Activated T-helper 2 cell treated with anti-CD3 and anti-CD28 coated beads, Interferon-gamma antibody, Interleukin-2, Interleukin-4, amounts not matched to agents 10 μg/mL and 5 μg/mL and 100 μg/mL, durations not matched to agents 14 hours and 24 hours and 36 hours (primary cell): ENCODE measurements at regions of chr1 and their contacts with region 1.

Region 1: DNA sequence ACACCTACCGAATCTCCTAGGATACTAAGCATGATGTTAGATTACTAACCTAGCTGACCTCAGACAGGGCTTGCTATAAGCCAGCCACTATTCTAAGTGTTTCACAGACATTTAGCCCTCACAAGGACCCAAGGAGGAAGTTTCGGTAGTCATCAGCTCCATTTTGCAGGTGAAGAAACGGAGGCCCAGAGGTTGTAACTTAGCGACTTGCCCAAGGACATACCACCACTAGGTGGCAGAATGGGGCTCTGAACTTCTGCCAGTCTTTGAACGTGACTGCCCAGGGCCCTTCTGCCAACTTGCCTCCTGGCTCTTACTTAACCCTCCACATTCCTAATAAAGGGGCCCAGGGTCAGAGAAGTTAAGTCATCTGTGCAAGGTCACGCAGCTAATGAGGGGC is 283.5 kb downstream of the C1orf94 start:
- DNase-seq: peak; percentile 11
- H3K4me3 Mint-ChIP-seq: no peak overlapping the region
- H3K27ac Mint-ChIP-seq: no peak overlapping the region
- H3K4me1 Mint-ChIP-seq: no peaks in the 10 kb centered on the region
- H3K27me3 Mint-ChIP-seq: no peaks in the 10 kb centered on the region

Region 2: GRCh38 chr1:34500451-34500850 is 40.3 kb after region 1 on chr1:
- intact Hi-C with region 1: no loop called
- DNase-seq: no peak
- H3K4me3 Mint-ChIP-seq: no peak overlapping the region
- H3K27ac Mint-ChIP-seq: no peak overlapping the region
- H3K4me1 Mint-ChIP-seq: no peaks in the 10 kb centered on the region
- H3K27me3 Mint-ChIP-seq: no peaks in the 10 kb centered on the region

Region 3: DNA sequence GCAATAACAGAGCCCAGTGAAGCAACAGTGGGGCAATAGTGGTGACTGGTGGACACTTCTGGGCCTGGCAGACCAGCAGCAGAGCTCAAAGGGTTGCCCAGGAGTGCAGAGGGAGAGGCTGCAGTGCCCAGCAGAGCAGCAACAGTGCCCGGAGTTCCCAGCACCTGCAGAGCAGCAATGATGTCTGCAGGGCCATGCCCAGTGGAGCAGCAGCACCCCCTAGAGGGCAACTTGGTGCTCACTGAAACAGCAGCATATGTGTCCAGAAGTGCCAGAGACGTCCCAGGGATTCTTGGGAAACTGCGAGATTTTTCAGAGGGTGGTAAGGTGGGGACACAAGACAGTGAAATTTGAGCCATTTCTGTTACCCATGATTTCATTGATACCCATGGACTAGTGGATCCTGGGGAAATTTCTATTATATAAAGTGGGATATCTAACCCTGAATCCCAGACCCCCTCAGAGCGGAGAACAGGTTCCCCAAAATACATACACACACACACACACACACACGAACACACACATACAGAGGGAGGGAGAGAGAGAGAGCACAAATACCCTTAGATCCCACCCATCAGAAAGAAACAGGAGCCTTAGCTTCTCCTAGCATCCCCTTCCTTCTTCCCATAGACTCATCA is 137.8 kb after region 1 on chr1:
- intact Hi-C with region 1: loop called (anchors 1 kb)
- DNase-seq: peak; percentile 27
- H3K4me3 Mint-ChIP-seq: no peak overlapping the region
- H3K27ac Mint-ChIP-seq: no peak overlapping the region
- H3K4me1 Mint-ChIP-seq: no peaks in the 10 kb centered on the region
- H3K27me3 Mint-ChIP-seq: peaks cover 8% of the 10 kb centered on the region

Region 4: DNA sequence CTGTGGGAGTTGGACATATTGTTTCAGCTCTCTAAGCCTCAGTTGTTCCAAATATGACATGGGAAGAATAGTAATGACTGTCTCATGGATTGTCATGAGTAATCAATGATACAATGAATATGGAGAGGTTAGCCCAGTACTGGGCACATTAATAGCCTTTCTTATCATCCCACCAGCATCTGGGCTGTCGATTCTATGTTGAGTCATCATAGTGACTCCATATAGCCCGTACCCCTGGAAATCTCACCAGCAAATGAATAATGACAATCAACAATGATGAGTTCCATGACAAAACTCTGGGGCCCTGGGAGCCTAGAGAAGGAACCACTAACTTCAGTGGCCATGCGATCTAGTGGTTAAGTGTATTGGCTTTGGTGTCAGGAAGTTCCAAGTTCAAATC is 254.9 kb after region 1 on chr1:
- intact Hi-C with region 1: no loop called
- DNase-seq: no peak
- H3K4me3 Mint-ChIP-seq: no peak overlapping the region
- H3K27ac Mint-ChIP-seq: no peak overlapping the region
- H3K4me1 Mint-ChIP-seq: no peaks in the 10 kb centered on the region
- H3K27me3 Mint-ChIP-seq: peaks cover 3% of the 10 kb centered on the region

Region 5: GRCh38 chr1:34742667-34743270 is 282.6 kb after region 1 on chr1:
- intact Hi-C with region 1: loop called (anchors 5 kb)
- DNase-seq: peak; percentile 61
- H3K4me3 Mint-ChIP-seq: no peak overlapping the region
- H3K27ac Mint-ChIP-seq: no peak overlapping the region
- H3K4me1 Mint-ChIP-seq: no peaks in the 10 kb centered on the region
- H3K27me3 Mint-ChIP-seq: peaks cover 6% of the 10 kb centered on the region